ENCODE measurements at regions of chr2 and their contacts with region 1.

Region 1: GRCh38 chr2:46296840-46297545 is at the start of gene EPAS1:
- DNase-seq: peak; percentile 84
- ATAC-seq: peak; percentile 76
- H3K4me3 ChIP-seq: peak within 1 kb of the TSS; percentile 91 to 98 (median 96)
- H3K27ac ChIP-seq: peak within 1 kb of the TSS; percentile 78
- H3K4me1 ChIP-seq: peaks cover 32% of the 10 kb centered on the region
- H3K27me3 ChIP-seq: peaks cover 0 to 13% of the 10 kb centered on the region in 2 experiments; a peak in 2 of 5 replicates
- CTCF ChIP-seq: peak; percentile 15
- EP300 ChIP-seq: no peak
- POLR2A ChIP-seq: peak in 1 of 2 experiments; percentile 87; a peak in 2 of 4 replicates
- RAD21 ChIP-seq: peak; percentile 67
- total RNA-seq, gene EPAS1: 47.1 and 64.9 TPM in 2 replicates

Region 2: GRCh38 chr2:45993476-45993991 is 303.5 kb before region 1 on chr2:
- CTCF ChIA-PET with region 1: interaction called, 3 read pairs
- POLR2A ChIA-PET with region 1: interaction called, 12 read pairs
- in situ Hi-C with region 1: loop called (anchors 5 kb)
- intact Hi-C with region 1: loop called (anchors 2 kb)
- DNase-seq: peak; percentile 78
- ATAC-seq: peak; percentile 56
- H3K4me3 ChIP-seq: peak overlapping the region in 2 of 3 experiments; percentile 13 to 59; a peak in 3 of 6 replicates
- H3K27ac ChIP-seq: peak overlapping the region; percentile 72
- H3K4me1 ChIP-seq: peaks cover 36% of the 10 kb centered on the region
- H3K27me3 ChIP-seq: no peaks in the 10 kb centered on the region
- CTCF ChIP-seq: peak; percentile 87
- EP300 ChIP-seq: peak in 1 of 2 experiments; percentile 15; a peak in 1 of 4 replicates
- POLR2A ChIP-seq: no peak
- RAD21 ChIP-seq: peak; percentile 76

Region 3: DNA sequence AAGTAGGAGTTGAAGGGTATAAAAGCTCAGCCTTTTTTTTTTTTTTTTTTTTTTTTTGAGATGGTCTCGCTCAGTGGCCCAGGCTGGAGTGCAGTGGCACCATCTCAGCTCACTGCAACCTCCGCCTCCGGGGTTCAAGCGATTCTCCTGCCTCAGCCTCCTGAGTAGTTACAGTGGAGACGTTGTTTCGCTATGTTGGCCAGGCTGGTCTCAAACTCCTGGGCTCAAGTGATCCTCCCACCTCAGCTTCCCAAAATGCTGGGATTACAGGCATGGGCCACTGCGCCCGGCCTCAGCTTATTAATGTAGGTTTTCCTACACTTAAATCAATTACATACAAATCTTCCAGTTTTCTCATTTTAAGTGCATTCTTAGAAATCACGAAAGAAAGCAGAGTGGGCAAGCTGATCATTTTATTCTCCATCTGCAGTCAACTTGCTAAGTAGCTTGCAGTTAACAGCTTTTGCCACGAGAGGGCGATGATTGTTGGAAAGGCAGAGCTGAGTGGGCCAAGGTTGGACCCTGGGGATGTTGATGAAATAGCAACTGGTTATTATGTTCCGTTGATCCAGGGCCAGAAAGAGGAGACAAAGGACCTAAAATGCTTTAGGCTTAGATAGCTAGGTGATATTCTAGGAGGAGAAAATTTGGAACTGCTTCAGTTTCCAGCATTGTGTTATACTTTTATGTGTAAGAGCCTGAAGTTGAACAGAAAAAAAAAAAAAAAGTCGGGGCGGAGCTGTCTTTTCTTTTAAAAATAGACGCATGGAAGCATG is 234.2 kb before region 1 on chr2:
- CTCF ChIA-PET with region 1: interaction called, 10 read pairs
- POLR2A ChIA-PET with region 1: interaction called, 5 read pairs
- in situ Hi-C with region 1: loop called (anchors 5 kb)
- intact Hi-C with region 1: loop called (anchors 1 kb)
- DNase-seq: peak; percentile 80
- ATAC-seq: peak; percentile 91
- H3K4me3 ChIP-seq: no peak overlapping the region
- H3K27ac ChIP-seq: no peak overlapping the region
- H3K4me1 ChIP-seq: peaks cover 6% of the 10 kb centered on the region; the same call in 1 of the 2 replicates
- H3K27me3 ChIP-seq: no peaks in the 10 kb centered on the region
- CTCF ChIP-seq: peak; percentile 93
- EP300 ChIP-seq: no peak
- POLR2A ChIP-seq: no peak
- RAD21 ChIP-seq: peak; percentile 89

Region 4: DNA sequence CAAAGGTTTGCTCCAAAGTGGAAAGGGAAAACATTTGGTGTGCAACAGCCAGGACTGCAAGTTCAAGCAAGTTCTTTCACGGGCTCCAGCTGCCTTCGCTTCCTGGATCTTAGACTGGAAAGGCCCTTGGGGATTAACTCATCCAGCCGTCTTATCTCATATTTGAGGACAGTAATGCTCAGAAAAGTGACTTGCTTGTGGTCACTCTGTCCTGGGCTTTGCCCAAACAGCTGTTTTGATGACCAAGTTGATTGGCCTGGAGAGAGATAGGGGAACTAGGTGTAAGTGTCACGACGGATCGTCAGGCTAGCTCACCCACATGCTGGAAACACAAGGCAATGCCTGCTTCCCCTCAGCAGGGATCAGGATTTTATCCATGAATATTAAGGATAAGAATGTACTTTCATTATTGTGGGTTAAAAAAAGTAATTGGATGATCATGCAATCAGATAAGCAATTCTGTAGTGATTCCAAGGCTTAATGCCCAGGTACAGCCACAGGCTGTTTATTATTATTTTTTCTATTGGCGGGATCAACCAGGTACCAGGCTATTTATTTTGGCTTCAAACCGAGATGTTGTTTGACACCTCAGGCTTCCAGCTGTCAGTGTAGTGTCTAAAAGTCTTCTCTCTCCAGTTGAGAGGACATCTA is 162.3 kb before region 1 on chr2:
- CTCF ChIA-PET with region 1: no interaction called
- POLR2A ChIA-PET with region 1: no interaction called
- in situ Hi-C with region 1: no loop called
- intact Hi-C with region 1: no loop called
- DNase-seq: no peak
- ATAC-seq: no peak
- H3K4me3 ChIP-seq: no peak overlapping the region
- H3K27ac ChIP-seq: no peak overlapping the region
- H3K4me1 ChIP-seq: no peaks in the 10 kb centered on the region
- H3K27me3 ChIP-seq: no peaks in the 10 kb centered on the region
- CTCF ChIP-seq: no peak
- EP300 ChIP-seq: no peak
- POLR2A ChIP-seq: no peak
- RAD21 ChIP-seq: no peak

Region 5: DNA sequence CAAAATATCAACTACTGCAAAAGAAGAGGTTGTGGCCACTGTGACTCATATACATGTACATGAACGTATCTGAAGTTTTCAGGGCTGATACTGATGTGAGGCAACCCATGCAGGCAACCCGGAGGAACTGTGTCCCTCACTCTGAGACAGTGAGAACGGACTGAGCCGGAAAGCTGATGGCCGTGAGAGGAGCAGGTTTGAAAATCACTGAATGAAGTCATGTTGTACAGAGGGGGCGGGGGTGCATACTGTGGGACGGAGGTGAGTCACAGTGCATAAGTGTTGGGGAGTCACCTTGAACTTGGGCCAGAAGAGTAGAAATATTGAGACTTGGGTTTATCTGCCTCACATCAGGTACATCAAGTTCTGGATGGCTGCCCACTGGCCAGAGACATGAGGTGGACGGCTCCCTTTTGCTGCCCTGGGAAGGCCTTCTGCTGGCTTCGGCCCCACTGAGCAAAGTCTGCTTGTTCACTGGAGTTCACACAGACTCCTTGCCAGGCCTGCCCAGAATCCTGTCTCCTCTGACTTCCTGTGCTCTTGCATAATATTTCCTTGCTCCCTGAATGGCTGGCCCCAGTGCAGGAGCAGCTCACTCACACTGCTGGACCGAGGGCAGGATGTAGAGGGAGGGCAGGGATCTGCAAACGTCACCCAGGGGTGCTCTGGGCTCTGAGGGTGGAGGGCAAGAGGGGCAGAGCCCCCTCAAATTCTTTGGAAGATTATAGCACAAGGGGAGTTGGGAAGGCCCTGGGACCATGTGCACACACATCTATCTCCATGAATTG is 18.3 kb after region 1 on chr2:
- CTCF ChIA-PET with region 1: no interaction called
- POLR2A ChIA-PET with region 1: interaction called, 16 read pairs
- in situ Hi-C with region 1: no loop called
- intact Hi-C with region 1: loop called (anchors 1 kb)
- DNase-seq: peak; percentile 97
- ATAC-seq: peak; percentile 90
- H3K4me3 ChIP-seq: peak overlapping the region in 2 of 3 experiments; percentile 12 to 47; a peak in 5 of 6 replicates
- H3K27ac ChIP-seq: peak overlapping the region; percentile 66
- H3K4me1 ChIP-seq: peaks cover 99% of the 10 kb centered on the region
- H3K27me3 ChIP-seq: no peaks in the 10 kb centered on the region
- CTCF ChIP-seq: peak; percentile 24
- EP300 ChIP-seq: peak in 1 of 2 experiments; percentile 83; a peak in 2 of 4 replicates
- POLR2A ChIP-seq: peak; percentile 61 to 72
- RAD21 ChIP-seq: peak; percentile 56; the same call in 1 of the 2 replicates

Region 6: GRCh38 chr2:46364797-46365457 is 67.9 kb after region 1 on chr2:
- CTCF ChIA-PET with region 1: interaction called, 10 read pairs
- POLR2A ChIA-PET with region 1: interaction called, 4 read pairs
- in situ Hi-C with region 1: loop called (anchors 5 kb)
- intact Hi-C with region 1: loop called (anchors 1 kb)
- DNase-seq: peak; percentile 57
- ATAC-seq: peak; percentile 48
- H3K4me3 ChIP-seq: no peak overlapping the region
- H3K27ac ChIP-seq: no peak overlapping the region
- H3K4me1 ChIP-seq: no peaks in the 10 kb centered on the region
- H3K27me3 ChIP-seq: no peaks in the 10 kb centered on the region
- CTCF ChIP-seq: peak; percentile 83
- EP300 ChIP-seq: no peak
- POLR2A ChIP-seq: no peak
- RAD21 ChIP-seq: peak; percentile 75

Region 7: DNA sequence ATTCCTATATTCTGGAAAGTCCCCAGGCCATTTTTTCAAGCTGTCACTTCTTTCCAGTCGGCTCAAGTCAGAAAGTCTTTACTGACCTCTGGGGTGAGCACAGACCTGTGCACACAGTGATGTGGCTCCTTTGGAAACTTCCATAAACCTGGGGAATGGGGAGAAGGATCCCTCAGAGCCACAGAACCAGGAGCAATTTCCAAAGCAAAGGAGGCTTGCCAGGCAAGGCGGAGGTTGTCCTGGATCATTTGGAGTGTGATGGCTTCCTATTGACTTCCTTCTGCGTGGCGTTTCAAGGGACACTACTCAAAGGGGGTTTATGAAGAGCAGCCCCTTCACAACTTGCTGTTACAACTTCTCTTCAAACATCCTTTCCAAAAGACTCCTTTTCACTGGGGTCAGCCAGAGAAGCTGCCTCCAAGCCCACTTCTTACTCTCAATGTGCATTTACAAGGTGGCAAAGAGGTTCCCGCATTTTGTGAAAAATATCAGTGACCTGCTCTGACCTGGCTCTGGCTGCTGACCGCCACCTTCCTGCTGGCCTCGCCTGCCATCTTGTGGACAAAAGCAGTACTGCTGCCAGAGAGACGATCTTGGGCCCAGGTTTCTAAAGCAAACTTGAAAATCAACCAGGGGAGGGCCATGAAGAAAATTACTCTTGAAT is 164.2 kb after region 1 on chr2:
- CTCF ChIA-PET with region 1: interaction called, 3 read pairs
- POLR2A ChIA-PET with region 1: interaction called, 3 read pairs
- in situ Hi-C with region 1: no loop called
- intact Hi-C with region 1: loop called (anchors 2 kb)
- DNase-seq: peak; percentile 70
- ATAC-seq: peak; percentile 73
- H3K4me3 ChIP-seq: peak overlapping the region in 2 of 3 experiments; percentile 12 to 20; a peak in 3 of 6 replicates
- H3K27ac ChIP-seq: no peak overlapping the region
- H3K4me1 ChIP-seq: peaks cover 46% of the 10 kb centered on the region
- H3K27me3 ChIP-seq: peaks cover 0 to 14% of the 10 kb centered on the region in 2 experiments; a peak in 1 of 5 replicates
- CTCF ChIP-seq: peak; percentile 98
- EP300 ChIP-seq: no peak
- POLR2A ChIP-seq: no peak
- RAD21 ChIP-seq: peak; percentile 98

Measured in HepG2 (cell line).